Naive thymus-derived CD8-positive, alpha-beta T cell (primary cell): ENCODE measurements at regions of chr11 and their contacts with region 1.

Region 1: DNA sequence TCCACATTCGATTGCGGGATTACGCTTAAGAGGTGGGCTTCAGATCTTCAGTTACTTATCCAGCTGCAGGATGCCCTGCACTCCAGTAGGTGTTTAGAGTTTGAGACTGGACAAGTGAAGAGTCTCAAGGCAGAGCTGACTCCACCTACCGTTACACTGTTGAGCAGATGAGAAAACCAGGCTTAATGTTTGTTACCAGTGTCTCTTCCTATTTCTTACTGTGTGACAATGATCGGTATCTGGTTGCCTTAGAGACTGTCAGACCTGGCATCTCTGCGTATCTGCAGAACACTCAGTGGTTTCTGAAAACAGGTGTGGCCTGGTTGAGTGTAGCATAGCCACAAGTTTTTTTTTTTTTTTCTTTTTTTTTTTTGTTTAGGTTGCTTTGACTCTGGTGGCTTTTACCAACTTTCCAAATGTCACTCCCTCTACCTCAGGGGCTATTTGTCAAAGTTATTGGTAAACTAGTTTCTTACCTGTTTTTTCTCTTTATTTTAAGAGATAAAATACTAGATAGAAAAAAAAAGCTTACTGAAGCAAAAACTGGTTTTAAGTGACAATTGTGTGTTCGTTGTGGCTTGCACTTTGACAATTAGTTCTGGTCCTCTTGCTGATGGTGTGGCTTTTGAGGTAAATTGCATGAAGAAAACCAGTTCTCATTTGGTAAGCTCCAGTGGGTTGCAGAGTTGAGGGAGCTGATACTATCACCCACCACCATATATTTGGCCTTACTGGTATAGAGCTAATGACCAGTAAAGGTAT is 284.8 kb downstream of the ETS1 start:
- DNase-seq: peak; percentile 24 to 94 (median 78)
- ATAC-seq: peak; percentile 78 to 88
- H3K4me3 Mint-ChIP-seq: peak overlapping the region; percentile 85 to 95 (median 91)
- H3K27ac Mint-ChIP-seq: peak overlapping the region; percentile 97 to 100 (median 99)
- H3K4me1 Mint-ChIP-seq: peaks cover 48 to 95% (median 84%) of the 10 kb centered on the region in 4 donors
- H3K27me3 Mint-ChIP-seq: no peaks in the 10 kb centered on the region

Region 2: DNA sequence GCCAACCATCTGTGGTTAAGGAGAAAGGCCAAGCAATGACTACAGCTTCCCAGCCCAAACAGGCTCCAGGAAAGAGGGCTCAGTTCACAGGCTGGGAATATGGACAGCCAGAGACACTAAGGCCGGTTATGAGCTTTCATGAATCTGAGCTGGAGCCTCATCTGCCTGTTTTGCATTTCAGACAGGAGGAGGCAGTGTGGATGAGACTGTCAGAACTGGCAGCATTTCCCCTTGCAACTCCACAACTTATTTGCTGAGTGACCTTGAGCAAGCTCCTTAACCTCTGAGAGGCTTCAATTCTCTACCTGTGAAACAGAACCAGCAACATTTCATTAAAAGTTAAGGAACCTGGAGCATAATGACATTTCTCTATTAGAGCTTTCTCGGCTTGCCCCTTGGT is 20.8 kb after region 1 on chr11:
- POLR2A ChIA-PET with region 1: interaction called, 178 read pairs
- DNase-seq: peak in 6 of 10 donors; percentile 17 to 69 (median 52)
- ATAC-seq: no peak
- H3K4me3 Mint-ChIP-seq: peak overlapping the region; percentile 6 to 83 (median 76)
- H3K27ac Mint-ChIP-seq: peak overlapping the region; percentile 93 to 99 (median 98)
- H3K4me1 Mint-ChIP-seq: peaks cover 52 to 92% (median 86%) of the 10 kb centered on the region in 4 donors
- H3K27me3 Mint-ChIP-seq: no peaks in the 10 kb centered on the region

Region 3: GRCh38 chr11:128399251-128400121 is 96.9 kb after region 1 on chr11:
- POLR2A ChIA-PET with region 1: no interaction called
- DNase-seq: no peak
- ATAC-seq: peak in 1 of 2 donors; percentile 39
- H3K4me3 Mint-ChIP-seq: no peak overlapping the region
- H3K27ac Mint-ChIP-seq: peak overlapping the region in 4 of 10 donors; percentile 29 to 81 (median 44)
- H3K4me1 Mint-ChIP-seq: peaks cover 4 to 29% (median 23%) of the 10 kb centered on the region in 4 donors
- H3K27me3 Mint-ChIP-seq: no peaks in the 10 kb centered on the region

Region 4: DNA sequence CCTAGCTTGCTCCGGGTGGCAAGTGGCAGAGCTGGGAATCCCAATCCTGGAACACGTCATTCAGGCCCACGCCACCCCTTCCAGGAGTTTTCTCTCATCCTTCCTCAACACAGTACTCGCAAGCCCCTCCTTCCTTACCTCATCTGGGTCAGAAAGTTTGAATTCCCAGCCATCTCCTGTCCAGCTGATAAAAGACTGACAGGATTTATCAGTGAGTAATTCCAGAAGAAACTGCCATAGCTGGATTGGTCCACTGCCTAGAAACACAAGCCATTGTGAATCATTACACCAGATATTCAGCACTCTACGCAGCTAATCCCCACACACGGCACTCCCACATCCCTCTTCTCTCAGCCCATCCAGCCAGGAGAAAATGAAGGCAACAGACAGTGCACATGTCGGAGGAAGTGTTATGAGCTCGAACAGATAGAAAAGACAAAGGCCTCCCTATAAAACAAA is 160.8 kb after region 1 on chr11:
- POLR2A ChIA-PET with region 1: interaction called, 252 read pairs
- DNase-seq: no peak
- ATAC-seq: no peak
- H3K4me3 Mint-ChIP-seq: peak overlapping the region; percentile 56 to 89 (median 86)
- H3K27ac Mint-ChIP-seq: peak overlapping the region; percentile 93 to 99 (median 98)
- H3K4me1 Mint-ChIP-seq: peaks cover 66 to 96% (median 94%) of the 10 kb centered on the region in 4 donors
- H3K27me3 Mint-ChIP-seq: no peaks in the 10 kb centered on the region

Region 5: DNA sequence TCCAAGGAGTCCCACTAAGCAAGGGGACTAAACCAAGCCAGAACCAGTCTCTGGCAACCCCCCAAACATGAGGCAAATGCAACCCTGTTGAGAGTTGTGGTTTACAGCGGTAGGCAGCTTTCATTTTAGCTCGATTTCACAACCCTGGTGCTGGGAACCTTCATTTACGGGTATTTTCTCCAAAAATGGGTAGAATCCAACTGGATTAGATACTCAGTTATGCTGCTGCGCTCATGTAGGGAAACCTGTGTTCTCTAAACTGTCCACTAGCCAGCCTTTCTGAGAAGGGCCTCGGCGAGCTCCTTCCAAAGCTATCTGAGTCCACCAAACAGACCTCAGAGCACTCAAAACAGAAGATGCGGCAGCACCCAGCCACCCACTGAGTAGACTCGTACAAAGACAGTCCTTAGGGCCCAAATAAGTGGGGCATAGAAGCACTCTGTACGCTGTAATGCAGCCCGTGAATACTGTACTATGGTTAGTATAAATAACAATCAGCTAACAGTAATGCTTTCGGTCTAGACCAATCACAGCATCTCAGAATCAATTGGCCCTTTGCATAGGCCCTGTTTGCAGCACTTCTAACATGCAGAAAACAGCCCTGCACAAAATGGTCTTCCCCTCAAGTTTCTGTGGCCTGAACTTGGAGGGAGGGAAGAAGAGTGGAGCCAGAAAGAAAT is 180.0 kb after region 1 on chr11:
- POLR2A ChIA-PET with region 1: interaction called, 252 read pairs
- DNase-seq: peak in 8 of 10 donors; percentile 70 to 85 (median 78)
- ATAC-seq: peak; percentile 65 to 82
- H3K4me3 Mint-ChIP-seq: peak overlapping the region; percentile 73 to 89 (median 82)
- H3K27ac Mint-ChIP-seq: peak overlapping the region; percentile 93 to 99 (median 98)
- H3K4me1 Mint-ChIP-seq: peaks cover 53 to 95% (median 95%) of the 10 kb centered on the region in 4 donors
- H3K27me3 Mint-ChIP-seq: no peaks in the 10 kb centered on the region

Region 6: GRCh38 chr11:128624269-128625175 is 321.9 kb after region 1 on chr11:
- POLR2A ChIA-PET with region 1: interaction called, 25 read pairs
- DNase-seq: peak; percentile 32 to 86 (median 61)
- ATAC-seq: peak; percentile 58 to 67
- H3K4me3 Mint-ChIP-seq: peak overlapping the region; percentile 52 to 85 (median 82)
- H3K27ac Mint-ChIP-seq: peak overlapping the region; percentile 93 to 99 (median 98)
- H3K4me1 Mint-ChIP-seq: peaks cover 66 to 99% (median 98%) of the 10 kb centered on the region in 4 donors
- H3K27me3 Mint-ChIP-seq: no peaks in the 10 kb centered on the region